Naive thymus-derived CD4-positive, alpha-beta T cell (primary cell): ENCODE measurements at regions of chr1 and their contacts with region 1.

Region 1: GRCh38 chr1:193121616-193122593 is at the start of gene CDC73:
- DNase-seq: peak; percentile 97 to 100 (median 99)
- ATAC-seq: peak; percentile 96
- H3K4me3 ChIP-seq: peak within 1 kb of the TSS; percentile 85
- H3K4me3 Mint-ChIP-seq: peak within 1 kb of the TSS; percentile 88 to 99 (median 95)
- H3K27ac ChIP-seq: peak within 1 kb of the TSS; percentile 91
- H3K27ac Mint-ChIP-seq: peak within 1 kb of the TSS; percentile 92 to 98 (median 96)
- H3K4me1 ChIP-seq: peaks cover 21 to 25% of the 10 kb centered on the region in 2 donors
- H3K4me1 Mint-ChIP-seq: peaks cover 33 to 68% (median 47%) of the 10 kb centered on the region in 7 donors
- H3K27me3 ChIP-seq: no peaks in the 10 kb centered on the region
- H3K27me3 Mint-ChIP-seq: peaks cover 0 to 11% (median 0%) of the 10 kb centered on the region in 5 donors
- total RNA-seq, gene CDC73: 57.6 to 65.0 (median 58.8) TPM

Region 2: GRCh38 chr1:192477630-192478029 is 644.3 kb before region 1 on chr1:
- CTCF ChIA-PET with region 1: no interaction called
- POLR2A ChIA-PET with region 1: no interaction called
- intact Hi-C with region 1: loop called (anchors 1 to 5 kb)
- DNase-seq: peak in 6 of 9 donors; percentile 20 to 59 (median 38)
- ATAC-seq: peak; percentile 75
- H3K4me3 ChIP-seq: no peak overlapping the region
- H3K4me3 Mint-ChIP-seq: no peak overlapping the region
- H3K27ac ChIP-seq: no peak overlapping the region
- H3K27ac Mint-ChIP-seq: no peak overlapping the region
- H3K4me1 ChIP-seq: no peaks in the 10 kb centered on the region
- H3K4me1 Mint-ChIP-seq: no peaks in the 10 kb centered on the region
- H3K27me3 ChIP-seq: no peaks in the 10 kb centered on the region
- H3K27me3 Mint-ChIP-seq: peaks cover 0 to 16% (median 0%) of the 10 kb centered on the region in 5 donors

Region 3: GRCh38 chr1:192580351-192580962 is 541.4 kb before region 1 on chr1:
- CTCF ChIA-PET with region 1: no interaction called
- POLR2A ChIA-PET with region 1: no interaction called
- intact Hi-C with region 1: loop called in 1 of 2 experiments (anchors 10 kb)
- DNase-seq: peak in 3 of 9 donors; percentile 15 to 44 (median 38)
- ATAC-seq: peak; percentile 40
- H3K4me3 ChIP-seq: no peak overlapping the region
- H3K4me3 Mint-ChIP-seq: peak overlapping the region in 2 of 10 donors; percentile 31 to 40
- H3K27ac ChIP-seq: no peak overlapping the region
- H3K27ac Mint-ChIP-seq: peak overlapping the region in 2 of 9 donors; percentile 8 to 43
- H3K4me1 ChIP-seq: peaks cover 7 to 15% of the 10 kb centered on the region in 2 donors
- H3K4me1 Mint-ChIP-seq: peaks cover 8 to 44% (median 28%) of the 10 kb centered on the region in 7 donors
- H3K27me3 ChIP-seq: no peaks in the 10 kb centered on the region
- H3K27me3 Mint-ChIP-seq: peaks cover 0 to 2% (median 0%) of the 10 kb centered on the region in 5 donors

Region 4: GRCh38 chr1:193085263-193085662 is 36.6 kb before region 1 on chr1:
- CTCF ChIA-PET with region 1: no interaction called
- POLR2A ChIA-PET with region 1: interaction called, 6 read pairs
- intact Hi-C with region 1: loop called in 1 of 2 experiments (anchors 5 kb)
- DNase-seq: no peak
- ATAC-seq: no peak
- H3K4me3 ChIP-seq: no peak overlapping the region
- H3K4me3 Mint-ChIP-seq: no peak overlapping the region
- H3K27ac ChIP-seq: no peak overlapping the region
- H3K27ac Mint-ChIP-seq: peak overlapping the region in 1 of 9 donors; percentile 57
- H3K4me1 ChIP-seq: no peaks in the 10 kb centered on the region
- H3K4me1 Mint-ChIP-seq: no peaks in the 10 kb centered on the region
- H3K27me3 ChIP-seq: no peaks in the 10 kb centered on the region
- H3K27me3 Mint-ChIP-seq: no peaks in the 10 kb centered on the region

Region 5: GRCh38 chr1:193143285-193143684 is 21.4 kb after region 1 on chr1:
- CTCF ChIA-PET with region 1: no interaction called
- POLR2A ChIA-PET with region 1: no interaction called
- intact Hi-C with region 1: loop called in 1 of 2 experiments (anchors 1 kb)
- DNase-seq: peak in 1 of 9 donors; percentile 25
- ATAC-seq: no peak
- H3K4me3 ChIP-seq: no peak overlapping the region
- H3K4me3 Mint-ChIP-seq: no peak overlapping the region
- H3K27ac ChIP-seq: no peak overlapping the region
- H3K27ac Mint-ChIP-seq: peak overlapping the region in 2 of 9 donors; percentile 8 to 46
- H3K4me1 ChIP-seq: no peaks in the 10 kb centered on the region
- H3K4me1 Mint-ChIP-seq: peaks cover 11 to 34% (median 27%) of the 10 kb centered on the region in 7 donors
- H3K27me3 ChIP-seq: no peaks in the 10 kb centered on the region
- H3K27me3 Mint-ChIP-seq: no peaks in the 10 kb centered on the region

Region 6: DNA sequence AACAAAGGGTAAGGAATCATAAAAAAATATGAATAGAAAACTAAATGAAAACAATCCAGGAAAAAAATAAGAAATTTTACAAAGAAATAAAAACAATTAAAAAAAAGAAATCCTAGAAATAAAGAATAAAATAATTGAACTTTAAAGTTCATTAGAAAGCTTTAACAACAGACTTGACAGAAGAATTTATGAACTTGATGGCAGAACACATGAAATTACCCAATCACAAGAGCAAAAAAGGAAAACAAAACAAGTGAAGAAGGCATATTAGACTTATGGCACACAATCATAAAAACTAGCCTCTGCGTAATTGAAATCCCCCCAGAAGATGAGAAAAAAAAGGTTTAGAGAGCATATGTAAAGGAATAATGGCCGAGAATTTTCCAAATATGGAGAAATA is 867.0 kb after region 1 on chr1:
- CTCF ChIA-PET with region 1: no interaction called
- POLR2A ChIA-PET with region 1: no interaction called
- intact Hi-C with region 1: no loop called
- DNase-seq: no peak
- ATAC-seq: no peak
- H3K4me3 ChIP-seq: no peak overlapping the region
- H3K4me3 Mint-ChIP-seq: no peak overlapping the region
- H3K27ac ChIP-seq: no peak overlapping the region
- H3K27ac Mint-ChIP-seq: no peak overlapping the region
- H3K4me1 ChIP-seq: no peaks in the 10 kb centered on the region
- H3K4me1 Mint-ChIP-seq: no peaks in the 10 kb centered on the region
- H3K27me3 ChIP-seq: no peaks in the 10 kb centered on the region
- H3K27me3 Mint-ChIP-seq: no peaks in the 10 kb centered on the region